CD4-positive, alpha-beta T cell (primary cell): ENCODE measurements at regions of chr14 and their contacts with region 1.

Region 1: DNA sequence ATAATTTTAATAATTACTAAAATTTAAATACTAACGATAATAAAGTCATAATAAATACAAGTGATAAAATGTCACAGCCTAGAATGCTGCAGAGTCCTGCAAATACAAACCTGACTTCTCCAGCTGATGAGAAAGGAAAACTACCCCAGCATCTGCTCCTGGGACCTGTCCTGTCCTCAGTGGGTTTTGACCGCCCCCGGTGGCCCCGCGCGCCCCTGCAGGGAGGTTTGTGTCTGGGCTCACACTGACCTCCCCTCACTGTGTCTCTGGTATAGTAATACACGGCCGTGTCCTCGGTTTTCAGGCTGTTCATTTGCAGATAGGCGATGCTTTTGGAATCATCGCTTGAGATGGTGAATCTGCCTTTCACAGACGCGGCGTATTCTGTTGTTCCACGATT is 1139.4 kb downstream of the TMEM121 start:
- DNase-seq: peak in 8 of 14 experiments; percentile 4 to 41 (median 19)
- ATAC-seq: no peak
- H3K4me3 ChIP-seq: no peak overlapping the region
- H3K4me3 Mint-ChIP-seq: no peak overlapping the region
- H3K27ac ChIP-seq: no peak overlapping the region
- H3K27ac Mint-ChIP-seq: no peak overlapping the region
- H3K4me1 ChIP-seq: no peaks in the 10 kb centered on the region
- H3K4me1 Mint-ChIP-seq: peaks cover 30% of the 10 kb centered on the region
- H3K27me3 ChIP-seq: no peaks in the 10 kb centered on the region
- H3K27me3 Mint-ChIP-seq: peaks cover 12% of the 10 kb centered on the region
- CTCF ChIP-seq: peak; percentile 47

Region 2: GRCh38 chr14:106619606-106620005 is 46.2 kb before region 1 on chr14:
- CTCF ChIA-PET with region 1: interaction called, 13 read pairs
- POLR2A ChIA-PET with region 1: no interaction called
- intact Hi-C with region 1: no loop called
- DNase-seq: no peak
- ATAC-seq: no peak
- H3K4me3 ChIP-seq: no peak overlapping the region
- H3K4me3 Mint-ChIP-seq: no peak overlapping the region
- H3K27ac ChIP-seq: no peak overlapping the region
- H3K27ac Mint-ChIP-seq: no peak overlapping the region
- H3K4me1 ChIP-seq: peaks cover 9% of the 10 kb centered on the region
- H3K4me1 Mint-ChIP-seq: peaks cover 8% of the 10 kb centered on the region
- H3K27me3 ChIP-seq: no peaks in the 10 kb centered on the region
- H3K27me3 Mint-ChIP-seq: peaks cover 42% of the 10 kb centered on the region
- CTCF ChIP-seq: no peak

Region 3: DNA sequence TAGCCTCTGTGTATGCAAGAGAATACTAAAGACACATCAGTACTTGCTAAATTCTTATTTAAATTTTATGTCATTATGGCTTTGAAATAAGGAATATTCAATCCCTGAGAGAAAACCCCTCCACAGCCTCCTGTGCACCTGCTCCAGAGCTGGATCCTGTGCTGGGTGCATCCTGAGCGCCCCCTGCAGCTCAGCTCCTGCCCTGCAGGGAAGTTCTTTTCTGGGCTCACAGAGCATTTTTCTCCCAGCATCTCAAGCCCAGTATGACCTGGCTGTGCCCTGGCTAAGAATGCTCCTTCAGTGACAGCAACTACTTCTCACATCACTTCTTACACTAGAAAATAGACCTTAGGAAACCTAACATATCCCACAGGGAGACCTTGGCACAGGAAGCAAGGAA is 72.3 kb after region 1 on chr14:
- CTCF ChIA-PET with region 1: no interaction called
- POLR2A ChIA-PET with region 1: no interaction called
- intact Hi-C with region 1: no loop called
- DNase-seq: peak in 5 of 14 experiments; percentile 36 to 70 (median 40)
- ATAC-seq: no peak
- H3K4me3 ChIP-seq: no peak overlapping the region
- H3K4me3 Mint-ChIP-seq: no peak overlapping the region
- H3K27ac ChIP-seq: no peak overlapping the region
- H3K27ac Mint-ChIP-seq: no peak overlapping the region
- H3K4me1 ChIP-seq: peaks cover 35% of the 10 kb centered on the region
- H3K4me1 Mint-ChIP-seq: peaks cover 17% of the 10 kb centered on the region
- H3K27me3 ChIP-seq: no peaks in the 10 kb centered on the region
- H3K27me3 Mint-ChIP-seq: no peaks in the 10 kb centered on the region
- CTCF ChIP-seq: no peak

Region 4: GRCh38 chr14:106766145-106766544 is 100.3 kb after region 1 on chr14:
- CTCF ChIA-PET with region 1: no interaction called
- POLR2A ChIA-PET with region 1: no interaction called
- intact Hi-C with region 1: loop called in 1 of 2 experiments (anchors 5 kb)
- DNase-seq: no peak
- ATAC-seq: no peak
- H3K4me3 ChIP-seq: no peak overlapping the region
- H3K4me3 Mint-ChIP-seq: peak overlapping the region; percentile 52
- H3K27ac ChIP-seq: no peak overlapping the region
- H3K27ac Mint-ChIP-seq: no peak overlapping the region
- H3K4me1 ChIP-seq: peaks cover 26% of the 10 kb centered on the region
- H3K4me1 Mint-ChIP-seq: peaks cover 52% of the 10 kb centered on the region
- H3K27me3 ChIP-seq: no peaks in the 10 kb centered on the region
- H3K27me3 Mint-ChIP-seq: no peaks in the 10 kb centered on the region
- CTCF ChIP-seq: no peak